Mammary epithelial cell (primary cell): ENCODE measurements at regions of chr1 and their contacts with region 1.

Region 1: DNA sequence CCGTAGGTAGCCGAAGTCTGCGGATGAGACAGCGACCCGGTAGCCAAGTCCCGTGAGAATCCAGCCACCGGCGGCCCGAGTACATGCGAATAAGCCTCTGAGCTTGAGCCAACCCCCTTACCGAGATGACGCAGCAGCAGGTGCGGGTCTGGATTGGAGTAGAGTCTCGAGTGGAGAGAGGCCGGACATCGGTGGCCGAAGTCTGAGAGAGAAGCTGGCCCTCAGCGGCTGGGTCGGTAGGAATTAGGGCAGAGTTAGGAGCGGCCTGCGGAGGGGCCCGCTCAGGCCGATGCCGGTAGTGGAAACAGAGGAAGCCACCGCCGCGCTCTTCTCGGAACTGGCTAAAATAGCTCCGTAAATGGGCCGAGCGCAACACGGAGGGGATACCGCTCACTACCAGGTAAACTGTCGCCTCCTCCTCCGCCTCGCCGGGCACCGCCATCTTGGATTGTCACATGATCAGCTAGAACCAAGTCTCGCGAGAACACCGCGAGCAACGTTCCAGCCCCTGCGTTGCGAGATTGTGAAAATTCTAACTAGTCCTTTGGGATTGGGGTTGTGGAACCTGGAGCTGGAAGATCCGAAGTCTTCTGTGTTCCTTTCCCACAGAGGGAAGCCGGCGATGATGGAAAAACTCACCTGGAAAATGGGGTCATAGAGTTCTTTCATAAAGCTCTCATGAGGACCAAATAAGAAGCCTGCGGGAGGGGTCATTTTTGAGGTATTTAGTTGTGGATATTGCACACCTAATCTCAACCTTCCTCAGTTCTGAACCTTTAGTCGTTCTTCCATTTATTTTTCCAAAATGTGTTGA is at the start of gene GPATCH3:
- DNase-seq: peak; percentile 91
- H3K4me3 ChIP-seq: peak within 1 kb of the TSS; percentile 66 to 90 (median 70)
- H3K27ac ChIP-seq: peak within 1 kb of the TSS; percentile 91
- H3K4me1 ChIP-seq: peaks cover 23% of the 10 kb centered on the region
- H3K27me3 ChIP-seq: no peaks in the 10 kb centered on the region
- CTCF ChIP-seq: no peak
- total RNA-seq, gene GPATCH3: 10.8 to 19.4 TPM

Region 2: GRCh38 chr1:26921540-26922430 is 21.6 kb after region 1 on chr1 and contains the start of gene NUDC:
- CTCF ChIA-PET with region 1: no interaction called
- dilution Hi-C with region 1: no loop called
- in situ Hi-C with region 1: no loop called
- intact Hi-C with region 1: loop called (anchors 1 kb)
- DNase-seq: peak; percentile 96
- H3K4me3 ChIP-seq: peak within 1 kb of the TSS; percentile 56 to 76 (median 71)
- H3K27ac ChIP-seq: peak within 1 kb of the TSS; percentile 86
- H3K4me1 ChIP-seq: peaks cover 21% of the 10 kb centered on the region
- H3K27me3 ChIP-seq: no peaks in the 10 kb centered on the region
- CTCF ChIP-seq: no peak
- total RNA-seq, gene NUDC: 22.7 to 96.8 TPM

Region 3: GRCh38 chr1:26959722-26960615 is 59.8 kb after region 1 on chr1 and contains the start of gene KDF1:
- CTCF ChIA-PET with region 1: no interaction called
- dilution Hi-C with region 1: loop called (anchors 5 kb)
- in situ Hi-C with region 1: no loop called
- intact Hi-C with region 1: loop called (anchors 2 kb)
- DNase-seq: peak; percentile 87
- H3K4me3 ChIP-seq: peak within 1 kb of the TSS; percentile 92 to 99 (median 98)
- H3K27ac ChIP-seq: peak within 1 kb of the TSS; percentile 85
- H3K4me1 ChIP-seq: peaks cover 33% of the 10 kb centered on the region
- H3K27me3 ChIP-seq: no peaks in the 10 kb centered on the region
- CTCF ChIP-seq: no peak
- total RNA-seq, gene KDF1: 15.2 to 24.7 TPM